ENCODE measurements at regions of chr1 and their contacts with region 1.

Region 1: GRCh38 chr1:110780600-110781484 is 92.1 kb upstream of the CD53 start:
- DNase-seq: peak; percentile 91
- ATAC-seq: peak; percentile 76
- H3K4me3 ChIP-seq: peak overlapping the region in 1 of 5 experiments; percentile 11
- H3K4me3 Mint-ChIP-seq: peak overlapping the region; percentile 52
- H3K27ac ChIP-seq: no peak overlapping the region
- H3K27ac Mint-ChIP-seq: peak overlapping the region; percentile 65
- H3K4me1 ChIP-seq: peaks cover 38 to 40% of the 10 kb centered on the region in 2 donors
- H3K4me1 Mint-ChIP-seq: peaks cover 42% of the 10 kb centered on the region
- H3K27me3 ChIP-seq: peaks cover 0 to 3% (median 0%) of the 10 kb centered on the region in 4 experiments
- H3K27me3 Mint-ChIP-seq: peaks cover 8% of the 10 kb centered on the region
- CTCF ChIP-seq: peak; percentile 86

Region 2: GRCh38 chr1:110209715-110210603 is 570.9 kb before region 1 on chr1 and contains the start of gene KCNC4:
- CTCF ChIA-PET with region 1: no interaction called
- POLR2A ChIA-PET with region 1: no interaction called
- intact Hi-C with region 1: loop called (anchors 5 kb)
- DNase-seq: peak; percentile 96
- ATAC-seq: peak; percentile 85
- H3K4me3 ChIP-seq: peak within 1 kb of the TSS; percentile 34 to 75 (median 66)
- H3K4me3 Mint-ChIP-seq: peak within 1 kb of the TSS; percentile 95
- H3K27ac ChIP-seq: peak within 1 kb of the TSS; percentile 76 to 83
- H3K27ac Mint-ChIP-seq: peak within 1 kb of the TSS; percentile 96
- H3K4me1 ChIP-seq: peaks cover 17 to 31% of the 10 kb centered on the region in 2 donors
- H3K4me1 Mint-ChIP-seq: peaks cover 43% of the 10 kb centered on the region
- H3K27me3 ChIP-seq: peaks cover 0 to 8% (median 0%) of the 10 kb centered on the region in 4 experiments
- H3K27me3 Mint-ChIP-seq: no peaks in the 10 kb centered on the region
- CTCF ChIP-seq: no peak
- total RNA-seq, gene KCNC4: 24.1 and 24.3 TPM in 2 replicates

Region 3: DNA sequence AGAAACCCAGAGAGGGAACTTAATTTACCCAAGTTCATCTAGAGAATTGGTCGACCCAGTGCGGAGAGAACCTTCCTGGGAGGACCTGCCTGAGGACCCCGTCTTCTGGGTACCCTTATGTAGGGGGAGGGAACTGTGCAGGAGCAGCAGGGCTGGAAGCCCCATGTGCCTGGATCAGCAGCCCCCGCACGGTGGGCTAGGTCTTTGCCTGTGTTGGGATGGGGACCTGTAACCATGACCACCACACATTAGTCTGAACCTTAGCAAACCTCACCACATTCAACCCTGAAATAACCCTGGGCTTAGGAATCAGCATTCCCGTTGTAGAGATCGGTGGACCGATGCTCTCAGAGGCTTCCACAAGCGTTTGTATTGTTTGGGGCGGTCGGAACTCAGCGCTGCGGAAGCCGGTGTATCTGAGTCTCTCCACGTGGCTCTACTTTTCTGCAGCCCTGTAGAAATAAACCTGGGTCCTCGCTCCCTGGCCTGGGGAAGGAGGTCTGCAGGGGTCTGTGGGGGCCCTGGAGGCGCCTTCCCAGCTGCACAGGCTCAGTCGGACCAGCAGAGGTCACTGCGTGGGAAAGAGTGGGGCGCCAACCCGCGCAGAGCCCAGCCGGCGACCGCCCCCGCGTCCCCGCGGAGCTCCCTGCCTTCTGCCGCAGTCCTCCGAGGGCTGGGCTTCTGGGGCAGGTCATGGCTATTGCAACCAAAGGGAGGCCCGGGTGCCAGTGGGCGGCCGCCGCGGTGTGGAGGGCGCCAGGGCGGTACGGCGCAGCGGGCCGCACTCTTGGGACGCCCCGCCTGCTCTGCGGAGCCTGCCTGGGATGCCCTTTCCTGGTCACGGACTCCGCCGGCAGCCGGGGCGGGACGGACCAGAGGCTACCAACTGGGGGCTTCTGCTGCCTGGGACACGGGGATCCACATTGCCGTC is 225.7 kb before region 1 on chr1:
- CTCF ChIA-PET with region 1: interaction called, 73 read pairs
- POLR2A ChIA-PET with region 1: no interaction called
- intact Hi-C with region 1: loop called (anchors 1 kb)
- DNase-seq: peak; percentile 74
- ATAC-seq: peak; percentile 93
- H3K4me3 ChIP-seq: peak overlapping the region in 2 of 5 experiments; percentile 20 to 27
- H3K4me3 Mint-ChIP-seq: peak overlapping the region; percentile 50
- H3K27ac ChIP-seq: no peak overlapping the region
- H3K27ac Mint-ChIP-seq: no peak overlapping the region
- H3K4me1 ChIP-seq: peaks cover 9 to 12% of the 10 kb centered on the region in 2 donors
- H3K4me1 Mint-ChIP-seq: peaks cover 4% of the 10 kb centered on the region
- H3K27me3 ChIP-seq: peaks cover 0 to 57% (median 24%) of the 10 kb centered on the region in 4 experiments
- H3K27me3 Mint-ChIP-seq: peaks cover 78% of the 10 kb centered on the region
- CTCF ChIP-seq: peak; percentile 83

Region 4: DNA sequence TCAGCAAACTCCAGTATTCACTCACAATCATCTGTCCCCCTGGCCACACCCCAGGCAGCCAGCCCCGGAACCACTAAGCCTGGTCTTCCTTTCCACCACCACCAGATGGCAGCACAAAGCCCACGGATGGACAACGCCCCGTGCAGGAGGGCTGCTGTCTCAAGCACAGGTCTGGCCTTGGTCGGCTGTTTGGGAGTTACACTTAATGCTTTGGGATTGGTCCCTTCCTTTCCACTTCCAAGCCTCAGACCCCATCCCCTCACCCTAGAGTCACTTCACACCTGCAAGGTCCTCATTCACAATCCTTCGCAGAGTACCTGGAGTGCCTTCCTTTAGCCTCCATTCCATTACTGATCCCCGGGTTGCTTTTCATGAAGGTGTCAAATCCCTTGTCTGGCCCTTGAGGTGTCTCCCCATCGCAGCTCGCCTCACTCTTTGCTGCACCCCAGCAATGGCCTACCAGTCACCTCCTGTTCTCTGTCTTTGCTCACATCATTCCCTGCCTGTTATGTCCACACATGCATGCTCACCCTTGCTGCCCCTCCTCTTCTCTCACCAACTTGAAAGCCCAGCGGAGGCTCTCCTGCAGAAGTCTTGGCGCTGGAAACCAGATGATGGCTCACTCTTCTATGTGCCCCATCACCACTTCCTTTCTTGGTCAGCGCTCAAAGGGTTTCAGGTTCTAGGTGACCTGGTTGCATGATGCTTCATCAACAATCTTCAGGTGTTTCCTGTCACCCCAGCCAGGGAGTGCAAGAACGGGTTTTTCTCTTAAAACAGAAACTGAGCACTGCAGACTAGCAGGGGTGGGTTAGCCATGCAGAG is 149.8 kb before region 1 on chr1:
- CTCF ChIA-PET with region 1: interaction called, 48 read pairs
- POLR2A ChIA-PET with region 1: no interaction called
- intact Hi-C with region 1: loop called (anchors 1 kb)
- DNase-seq: peak; percentile 86
- ATAC-seq: peak; percentile 76
- H3K4me3 ChIP-seq: peak overlapping the region in 2 of 5 experiments; percentile 13 to 28
- H3K4me3 Mint-ChIP-seq: no peak overlapping the region
- H3K27ac ChIP-seq: peak overlapping the region in 1 of 2 donors; percentile 65
- H3K27ac Mint-ChIP-seq: no peak overlapping the region
- H3K4me1 ChIP-seq: peaks cover 56 to 65% of the 10 kb centered on the region in 2 donors
- H3K4me1 Mint-ChIP-seq: peaks cover 43% of the 10 kb centered on the region
- H3K27me3 ChIP-seq: no peaks in the 10 kb centered on the region
- H3K27me3 Mint-ChIP-seq: no peaks in the 10 kb centered on the region
- CTCF ChIP-seq: peak; percentile 88

Region 5: DNA sequence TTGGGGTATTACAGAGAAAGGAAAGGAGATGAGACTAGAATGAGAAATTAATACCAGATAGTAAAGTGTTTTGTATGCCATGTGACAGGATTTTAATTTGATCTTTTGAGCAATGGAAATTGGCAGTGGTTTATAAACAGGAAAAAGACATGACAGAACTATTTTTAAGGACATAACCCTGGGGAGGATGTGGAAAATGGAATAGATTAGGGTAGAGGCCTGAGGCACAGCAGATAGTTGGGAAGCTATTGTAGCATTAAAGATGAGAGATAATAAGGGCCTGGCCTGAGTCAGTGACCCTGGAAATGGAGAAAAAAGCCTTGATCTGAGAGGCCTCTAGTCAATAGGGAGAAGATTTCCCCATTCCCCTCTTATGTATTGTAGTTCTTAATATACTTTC is 84.0 kb before region 1 on chr1:
- CTCF ChIA-PET with region 1: no interaction called
- POLR2A ChIA-PET with region 1: no interaction called
- intact Hi-C with region 1: no loop called
- DNase-seq: no peak
- ATAC-seq: no peak
- H3K4me3 ChIP-seq: no peak overlapping the region
- H3K4me3 Mint-ChIP-seq: no peak overlapping the region
- H3K27ac ChIP-seq: no peak overlapping the region
- H3K27ac Mint-ChIP-seq: no peak overlapping the region
- H3K4me1 ChIP-seq: no peaks in the 10 kb centered on the region
- H3K4me1 Mint-ChIP-seq: peaks cover 1% of the 10 kb centered on the region
- H3K27me3 ChIP-seq: no peaks in the 10 kb centered on the region
- H3K27me3 Mint-ChIP-seq: no peaks in the 10 kb centered on the region
- CTCF ChIP-seq: no peak

Region 6: DNA sequence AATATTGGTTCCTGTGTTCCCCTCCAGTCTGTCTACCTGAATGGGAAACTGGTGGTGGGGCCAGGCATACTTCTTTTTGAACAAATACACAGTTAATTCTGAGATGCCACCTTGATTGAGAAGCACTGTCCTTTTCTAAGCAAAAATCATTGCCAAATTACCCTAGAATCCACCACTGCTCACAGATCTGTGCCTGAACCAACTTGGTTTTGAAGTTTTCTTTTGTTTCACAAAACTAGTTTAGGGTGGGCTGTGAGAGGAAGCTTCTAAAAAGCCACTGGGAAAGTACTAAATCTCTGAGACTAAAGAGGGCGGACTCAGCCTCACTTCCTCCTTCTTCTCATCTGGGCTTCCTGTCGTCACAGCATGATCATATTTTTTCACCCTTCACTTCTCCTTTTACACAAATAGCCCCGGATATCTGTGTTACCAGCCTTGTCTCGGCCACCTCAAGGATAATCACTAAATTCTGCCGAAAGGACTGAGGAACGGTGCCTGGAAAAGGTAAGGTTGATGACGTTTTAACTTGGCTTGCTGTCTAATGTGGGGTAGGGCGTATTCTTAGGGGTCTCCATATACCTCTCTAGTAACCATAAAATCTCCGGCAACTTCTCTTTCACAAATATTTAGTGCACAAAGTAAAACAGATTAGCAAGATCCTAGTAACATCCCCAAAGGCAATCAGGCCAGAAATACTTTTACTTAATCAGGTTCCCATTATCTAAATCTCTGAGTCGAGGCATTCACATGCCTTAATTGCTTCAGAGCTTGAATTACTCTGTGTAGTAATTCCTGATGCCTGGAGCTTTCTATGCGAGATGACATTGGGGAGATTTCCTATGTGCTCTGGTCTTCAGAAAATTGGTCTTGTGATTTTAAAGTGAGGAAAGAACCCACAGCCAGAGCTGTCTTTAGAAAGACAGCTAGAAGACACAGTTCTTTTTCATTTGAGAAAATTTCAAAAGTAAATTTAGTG is 92.2 kb after region 1 on chr1 and contains the start of gene CD53:
- CTCF ChIA-PET with region 1: interaction called, 56 read pairs
- POLR2A ChIA-PET with region 1: no interaction called
- intact Hi-C with region 1: no loop called
- DNase-seq: peak; percentile 92
- ATAC-seq: peak; percentile 66
- H3K4me3 ChIP-seq: peak within 1 kb of the TSS; percentile 73 to 100 (median 97)
- H3K4me3 Mint-ChIP-seq: peak within 1 kb of the TSS; percentile 99
- H3K27ac ChIP-seq: peak within 1 kb of the TSS; percentile 96 to 99
- H3K27ac Mint-ChIP-seq: peak within 1 kb of the TSS; percentile 99
- H3K4me1 ChIP-seq: peaks cover 60% of the 10 kb centered on the region in 2 donors
- H3K4me1 Mint-ChIP-seq: peaks cover 70% of the 10 kb centered on the region
- H3K27me3 ChIP-seq: no peaks in the 10 kb centered on the region
- H3K27me3 Mint-ChIP-seq: no peaks in the 10 kb centered on the region
- CTCF ChIP-seq: no peak
- total RNA-seq, gene CD53: 490 and 495 TPM in 2 replicates

Region 7: GRCh38 chr1:111030590-111030989 is 249.7 kb after region 1 on chr1:
- CTCF ChIA-PET with region 1: interaction called, 10 read pairs
- POLR2A ChIA-PET with region 1: no interaction called
- intact Hi-C with region 1: loop called (anchors 5 kb)
- DNase-seq: peak; percentile 77
- ATAC-seq: peak; percentile 56
- H3K4me3 ChIP-seq: no peak overlapping the region
- H3K4me3 Mint-ChIP-seq: no peak overlapping the region
- H3K27ac ChIP-seq: no peak overlapping the region
- H3K27ac Mint-ChIP-seq: no peak overlapping the region
- H3K4me1 ChIP-seq: peaks cover 0 to 5% of the 10 kb centered on the region in 2 donors
- H3K4me1 Mint-ChIP-seq: peaks cover 15% of the 10 kb centered on the region
- H3K27me3 ChIP-seq: no peaks in the 10 kb centered on the region
- H3K27me3 Mint-ChIP-seq: peaks cover 3% of the 10 kb centered on the region
- CTCF ChIP-seq: peak; percentile 89